RWPE1 (cell line): ENCODE measurements at regions of chr1 and their contacts with region 1.

Region 1: DNA sequence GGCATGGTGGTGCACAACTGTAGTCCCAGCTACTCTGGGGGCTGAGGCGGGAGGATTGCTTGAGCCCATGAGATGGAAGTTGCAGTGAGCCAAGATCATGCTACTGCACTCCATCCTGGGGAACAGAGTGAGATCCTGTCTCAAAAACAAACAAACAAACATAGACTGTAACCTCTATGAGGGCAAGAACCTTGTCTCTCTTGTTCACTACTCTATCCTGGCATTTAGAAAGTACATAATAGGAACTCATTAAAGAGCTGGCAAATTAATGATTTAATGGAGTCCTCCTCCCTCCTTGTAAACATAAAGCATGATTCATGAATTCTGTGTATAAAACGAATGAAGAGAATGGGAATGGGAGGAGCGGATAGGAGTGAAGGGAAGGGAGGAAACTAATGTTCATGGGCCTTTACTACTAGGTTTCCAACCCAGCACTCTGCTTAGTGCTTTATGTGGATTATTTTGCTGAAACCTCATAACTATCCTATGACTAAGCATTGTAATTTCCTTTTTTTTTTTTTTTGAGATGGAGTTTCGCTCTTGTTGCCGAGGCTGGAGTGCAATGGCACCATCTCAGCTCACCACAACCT is 8.6 kb downstream of the LMOD1 start:
- DNase-seq: peak; percentile 74
- H3K27ac ChIP-seq: no peak overlapping the region
- CTCF ChIP-seq: no peak

Region 2: DNA sequence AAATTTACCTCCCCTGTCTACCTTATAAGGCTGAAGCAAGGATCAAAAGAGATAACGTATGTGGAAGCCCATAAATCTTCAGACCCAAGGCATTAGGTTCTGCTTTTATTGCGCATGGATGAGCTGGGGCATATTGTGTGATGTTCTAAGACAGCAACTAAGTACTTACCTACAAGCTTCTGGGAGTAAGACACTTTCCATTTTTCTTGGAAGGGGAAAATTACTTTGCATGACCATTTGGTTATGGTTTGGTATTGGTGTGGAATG is 12.5 kb before region 1 on chr1:
- CTCF ChIA-PET with region 1: interaction called, 4 read pairs
- POLR2A ChIA-PET with region 1: interaction called, 13 read pairs
- DNase-seq: no peak
- H3K27ac ChIP-seq: no peak overlapping the region
- CTCF ChIP-seq: no peak

Region 3: DNA sequence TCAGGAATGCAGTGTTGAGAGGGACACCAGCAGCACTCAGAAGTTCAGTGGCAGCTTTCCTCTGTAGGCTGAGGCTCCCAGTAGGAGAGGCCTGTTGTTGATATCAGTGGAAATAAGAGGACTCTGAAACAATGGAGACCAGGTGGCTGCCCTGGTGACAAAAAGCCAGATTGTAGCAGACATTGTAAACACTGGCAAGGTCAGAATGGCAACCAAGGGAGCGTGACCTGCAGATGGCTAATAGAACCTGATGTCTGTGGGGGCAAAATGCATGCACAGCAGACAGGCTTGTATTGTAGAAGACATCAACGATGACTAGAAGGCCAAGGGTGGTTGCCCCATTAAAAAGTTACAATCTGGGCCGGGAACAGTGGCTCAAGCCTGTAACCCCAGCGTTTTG is 131.9 kb after region 1 on chr1:
- CTCF ChIA-PET with region 1: no interaction called
- POLR2A ChIA-PET with region 1: no interaction called
- DNase-seq: no peak
- H3K27ac ChIP-seq: no peak overlapping the region
- CTCF ChIP-seq: no peak